Caco-2 (cell line): ENCODE measurements at regions of chr17 and their contacts with region 1.

Region 1: DNA sequence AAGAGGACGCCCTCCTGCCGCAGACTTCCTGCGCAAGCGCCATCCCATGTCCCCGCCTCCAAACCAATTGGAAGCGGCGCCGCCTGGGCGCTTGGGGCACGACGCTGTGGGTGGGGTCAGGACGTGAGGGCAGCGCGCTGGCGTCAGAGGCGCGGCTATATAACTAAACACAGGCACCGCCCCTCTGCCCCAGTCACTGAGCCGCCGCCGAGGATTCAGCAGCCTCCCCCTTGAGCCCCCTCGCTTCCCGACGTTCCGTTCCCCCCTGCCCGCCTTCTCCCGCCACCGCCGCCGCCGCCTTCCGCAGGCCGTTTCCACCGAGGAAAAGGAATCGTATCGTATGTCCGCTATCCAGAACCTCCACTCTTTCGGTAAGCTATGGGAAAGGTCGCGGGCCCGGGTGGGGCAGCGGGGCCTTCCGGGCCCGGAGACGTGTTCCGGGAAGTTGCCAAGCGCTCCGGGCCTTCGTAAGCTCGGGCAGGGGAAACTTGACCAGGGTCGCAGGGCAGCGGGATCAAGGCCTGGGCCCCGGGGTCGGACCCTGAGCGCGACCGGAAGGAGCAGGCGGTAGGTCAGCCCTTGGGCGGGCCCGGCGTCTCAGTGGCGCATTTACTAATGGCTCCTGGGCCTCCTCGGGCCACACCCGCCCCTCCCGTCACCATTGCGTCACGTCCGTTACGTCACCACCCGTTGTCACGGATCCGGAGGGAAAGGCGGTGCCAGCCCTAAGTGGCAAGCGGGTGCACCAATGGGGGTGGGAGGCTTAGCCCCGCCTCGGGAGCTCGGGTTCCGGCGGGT is at the start of gene EIF1:
- DNase-seq: peak; percentile 100
- H3K4me3 ChIP-seq: peak within 1 kb of the TSS; percentile 90
- H3K4me3 Mint-ChIP-seq: peak within 1 kb of the TSS; percentile 99
- H3K27ac Mint-ChIP-seq: peak within 1 kb of the TSS; percentile 97
- H3K4me1 ChIP-seq: peaks cover 8% of the 10 kb centered on the region; the same call in 1 of the 2 replicates
- H3K4me1 Mint-ChIP-seq: peaks cover 14% of the 10 kb centered on the region
- H3K27me3 ChIP-seq: no peaks in the 10 kb centered on the region
- H3K27me3 Mint-ChIP-seq: no peaks in the 10 kb centered on the region
- CTCF ChIP-seq: no peak
- total RNA-seq, gene EIF1: 759 and 783 TPM in 2 replicates

Region 2: GRCh38 chr17:40664582-40665333 is 1024.1 kb before region 1 on chr17 and contains the start of gene KRT222:
- CTCF ChIA-PET with region 1: no interaction called
- POLR2A ChIA-PET with region 1: interaction called, 13 read pairs
- intact Hi-C with region 1: no loop called
- DNase-seq: no peak
- H3K4me3 ChIP-seq: peak within 1 kb of the TSS; percentile 0; the same call in 1 of the 2 replicates
- H3K4me3 Mint-ChIP-seq: peak within 1 kb of the TSS; percentile 26
- H3K27ac Mint-ChIP-seq: no peak within 1 kb of the TSS
- H3K4me1 ChIP-seq: peaks cover 14% of the 10 kb centered on the region; the same call in 1 of the 2 replicates
- H3K4me1 Mint-ChIP-seq: peaks cover 8% of the 10 kb centered on the region
- H3K27me3 ChIP-seq: no peaks in the 10 kb centered on the region
- H3K27me3 Mint-ChIP-seq: no peaks in the 10 kb centered on the region
- CTCF ChIP-seq: no peak
- total RNA-seq, gene KRT222: not detected in 2 replicates

Region 3: GRCh38 chr17:41521574-41522261 is 167.2 kb before region 1 on chr17:
- CTCF ChIA-PET with region 1: interaction called, 5 read pairs
- POLR2A ChIA-PET with region 1: interaction called, 18 read pairs
- intact Hi-C with region 1: no loop called
- DNase-seq: peak; percentile 97 to 99
- H3K4me3 ChIP-seq: no peak overlapping the region
- H3K4me3 Mint-ChIP-seq: peak overlapping the region; percentile 68
- H3K27ac Mint-ChIP-seq: peak overlapping the region; percentile 97
- H3K4me1 ChIP-seq: peaks cover 66% of the 10 kb centered on the region
- H3K4me1 Mint-ChIP-seq: peaks cover 51% of the 10 kb centered on the region
- H3K27me3 ChIP-seq: no peaks in the 10 kb centered on the region
- H3K27me3 Mint-ChIP-seq: no peaks in the 10 kb centered on the region
- CTCF ChIP-seq: no peak

Region 4: GRCh38 chr17:41786227-41787020 is 97.5 kb after region 1 on chr17 and contains the start of gene JUP:
- CTCF ChIA-PET with region 1: interaction called, 9 read pairs
- POLR2A ChIA-PET with region 1: interaction called, 23 read pairs
- intact Hi-C with region 1: no loop called
- DNase-seq: peak; percentile 100
- H3K4me3 ChIP-seq: peak within 1 kb of the TSS; percentile 82
- H3K4me3 Mint-ChIP-seq: peak within 1 kb of the TSS; percentile 74
- H3K27ac Mint-ChIP-seq: peak within 1 kb of the TSS; percentile 93
- H3K4me1 ChIP-seq: peaks cover 23% of the 10 kb centered on the region
- H3K4me1 Mint-ChIP-seq: peaks cover 35% of the 10 kb centered on the region
- H3K27me3 ChIP-seq: no peaks in the 10 kb centered on the region
- H3K27me3 Mint-ChIP-seq: no peaks in the 10 kb centered on the region
- CTCF ChIP-seq: peak; percentile 40 to 91
- total RNA-seq, gene JUP: 392 and 419 TPM in 2 replicates

Region 5: GRCh38 chr17:41811549-41812380 is 122.9 kb after region 1 on chr17 and contains the start of gene P3H4:
- CTCF ChIA-PET with region 1: no interaction called
- POLR2A ChIA-PET with region 1: interaction called, 17 read pairs
- intact Hi-C with region 1: no loop called
- DNase-seq: peak; percentile 82 to 90
- H3K4me3 ChIP-seq: peak within 1 kb of the TSS; percentile 91
- H3K4me3 Mint-ChIP-seq: peak within 1 kb of the TSS; percentile 99
- H3K27ac Mint-ChIP-seq: peak within 1 kb of the TSS; percentile 97
- H3K4me1 ChIP-seq: peaks cover 21% of the 10 kb centered on the region
- H3K4me1 Mint-ChIP-seq: peaks cover 6% of the 10 kb centered on the region
- H3K27me3 ChIP-seq: no peaks in the 10 kb centered on the region
- H3K27me3 Mint-ChIP-seq: no peaks in the 10 kb centered on the region
- CTCF ChIP-seq: peak; percentile 53 to 83
- total RNA-seq, gene P3H4: 34.1 and 39.2 TPM in 2 replicates